ENCODE measurements at regions of chr1 and their contacts with region 1.

Region 1: DNA sequence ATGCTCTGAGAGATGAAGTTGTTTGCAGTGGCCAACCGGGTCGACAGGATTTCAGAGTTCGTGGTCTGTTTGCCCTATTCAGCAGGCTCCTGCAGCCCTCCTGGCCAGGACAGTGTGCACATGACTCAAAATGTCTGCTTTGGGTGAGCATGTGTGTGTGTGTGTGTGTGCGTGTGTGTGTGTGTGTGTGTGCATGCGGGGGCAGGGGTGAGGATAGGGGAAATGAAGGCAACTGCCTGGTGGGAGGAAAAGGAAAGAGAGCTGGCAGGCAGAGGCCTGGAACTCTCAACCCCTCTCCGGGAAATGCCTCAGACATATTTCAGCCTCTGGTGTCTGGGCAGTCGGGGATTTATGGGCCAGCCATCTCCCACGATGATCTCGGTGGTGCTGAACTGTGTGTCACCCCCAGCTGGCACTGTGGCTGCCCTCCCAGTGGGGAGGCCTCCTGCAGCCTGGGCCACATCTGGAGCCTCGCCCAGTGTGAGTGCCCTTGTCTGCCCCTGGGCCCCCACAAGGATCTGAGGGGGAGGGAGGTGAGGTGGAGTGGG is 15.2 kb downstream of the CDCP2 start:
- DNase-seq: no peak
- H3K4me3 Mint-ChIP-seq: no peak overlapping the region
- H3K27ac Mint-ChIP-seq: no peak overlapping the region
- H3K4me1 Mint-ChIP-seq: no peaks in the 10 kb centered on the region
- H3K27me3 Mint-ChIP-seq: no peaks in the 10 kb centered on the region

Region 2: DNA sequence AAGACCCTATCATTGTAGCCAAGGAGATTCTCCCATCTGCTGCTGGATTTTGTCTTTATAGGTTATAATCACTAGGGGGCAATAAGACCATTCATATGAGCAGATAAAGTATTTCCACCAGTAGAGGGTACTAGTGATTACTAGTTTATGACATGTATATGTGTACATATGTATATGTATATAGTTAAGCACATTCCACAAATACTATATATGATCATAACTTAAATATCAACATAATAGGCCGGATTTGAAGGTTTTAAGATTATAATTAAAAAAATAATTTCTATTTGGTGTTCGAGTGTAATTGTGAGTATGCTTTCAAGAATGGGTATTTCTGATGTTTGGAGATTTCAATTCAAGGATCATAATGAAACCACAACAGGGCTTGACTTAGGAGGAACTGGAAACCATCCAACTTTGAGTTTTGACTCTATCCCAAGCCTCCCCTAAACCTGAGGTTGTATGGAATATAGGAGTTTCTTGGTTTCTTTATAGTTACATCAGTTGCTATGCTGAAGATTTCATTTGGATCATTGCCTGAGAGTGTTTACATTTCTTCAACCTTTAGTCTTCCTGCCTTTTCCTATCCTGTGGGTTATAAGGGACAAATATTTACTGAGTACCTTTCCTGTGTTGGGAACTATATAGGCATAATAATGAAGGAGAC is 67.3 kb before region 1 on chr1:
- CTCF ChIA-PET with region 1: no interaction called
- POLR2A ChIA-PET with region 1: no interaction called
- DNase-seq: no peak
- H3K4me3 Mint-ChIP-seq: no peak overlapping the region
- H3K27ac Mint-ChIP-seq: no peak overlapping the region
- H3K4me1 Mint-ChIP-seq: no peaks in the 10 kb centered on the region
- H3K27me3 Mint-ChIP-seq: no peaks in the 10 kb centered on the region

Region 3: DNA sequence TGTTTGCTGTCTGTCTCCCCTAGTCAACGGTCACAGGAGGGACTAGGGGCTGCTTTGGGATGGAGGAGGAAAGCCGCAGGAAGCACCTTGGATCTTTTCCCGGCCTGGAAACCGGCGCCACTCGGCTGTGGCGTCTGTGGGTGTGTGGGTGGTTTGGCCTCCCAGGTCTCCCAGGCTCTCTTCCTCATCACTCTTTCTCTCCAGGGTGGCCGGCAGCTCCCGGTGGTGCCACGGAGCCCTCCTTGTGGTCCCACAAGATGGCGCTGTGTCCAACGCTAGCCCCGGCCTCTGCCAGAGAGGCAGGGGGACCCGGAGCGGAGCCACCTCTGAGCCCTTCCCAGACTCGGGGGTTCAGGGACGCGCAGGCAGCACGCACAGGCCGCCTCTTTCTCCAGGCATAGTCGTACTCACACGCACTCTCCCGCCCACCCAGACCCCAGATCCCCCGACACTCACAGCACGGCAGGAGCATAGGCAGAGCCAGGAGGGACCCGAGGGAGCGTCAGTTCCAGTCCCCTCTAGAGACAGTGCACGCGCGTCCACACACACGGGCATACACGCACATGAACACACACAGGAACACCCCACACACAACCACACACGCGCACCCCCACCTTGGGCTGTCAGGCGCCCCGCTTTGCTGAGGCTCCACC is 16.0 kb before region 1 on chr1:
- CTCF ChIA-PET with region 1: interaction called, 21 read pairs
- POLR2A ChIA-PET with region 1: no interaction called
- DNase-seq: peak; percentile 67
- H3K4me3 Mint-ChIP-seq: no peak overlapping the region
- H3K27ac Mint-ChIP-seq: no peak overlapping the region
- H3K4me1 Mint-ChIP-seq: peaks cover 9% of the 10 kb centered on the region
- H3K27me3 Mint-ChIP-seq: peaks cover 6% of the 10 kb centered on the region

Measured in activated CD4-positive, alpha-beta T cell treated with anti-CD3 and anti-CD28 coated beads, Interleukin-2, amount 10 ng/mL, durations not matched to agents 7 days and 5 days (primary cell).